B cell (primary cell): ENCODE measurements at regions of chr12 and their contacts with region 1.

Region 1: DNA sequence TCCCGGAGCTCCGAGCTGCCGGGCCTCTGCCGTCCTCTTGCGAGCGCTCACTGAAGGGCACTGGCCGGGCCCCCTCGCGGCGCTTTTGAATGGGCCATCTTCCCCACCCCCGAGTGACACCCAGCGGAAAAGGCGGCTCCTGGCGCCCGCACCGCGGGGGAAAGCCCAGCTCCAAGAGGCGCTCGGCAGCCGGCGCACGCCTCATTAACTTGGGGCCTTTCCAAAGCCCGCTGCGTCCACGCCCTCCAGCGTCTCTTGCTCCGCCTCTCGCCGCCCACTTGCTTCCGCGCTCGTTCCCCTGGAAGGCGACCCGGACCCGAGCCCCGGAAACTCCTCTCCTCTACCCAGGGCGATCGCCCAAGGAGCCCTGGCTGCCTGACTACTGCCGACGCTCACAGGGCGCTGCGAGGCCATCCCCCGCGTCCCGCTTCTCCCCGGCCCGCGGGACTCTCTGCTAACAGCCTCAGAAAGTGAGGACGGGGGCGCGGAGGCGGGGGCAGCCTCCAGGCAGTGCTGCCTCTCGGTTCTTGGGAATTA is at the start of gene PHLDA1:
- DNase-seq: peak; percentile 93
- ATAC-seq: peak; percentile 87
- H3K4me3 ChIP-seq: peak within 1 kb of the TSS; percentile 48 to 89 (median 79)
- H3K4me3 Mint-ChIP-seq: peak within 1 kb of the TSS; percentile 96
- H3K27ac ChIP-seq: peak within 1 kb of the TSS; percentile 19 to 81
- H3K27ac Mint-ChIP-seq: peak within 1 kb of the TSS; percentile 92
- H3K4me1 ChIP-seq: peaks cover 18 to 23% of the 10 kb centered on the region in 2 donors
- H3K4me1 Mint-ChIP-seq: peaks cover 25% of the 10 kb centered on the region
- H3K27me3 ChIP-seq: peaks cover 2 to 29% (median 25%) of the 10 kb centered on the region in 4 experiments
- H3K27me3 Mint-ChIP-seq: peaks cover 23% of the 10 kb centered on the region
- CTCF ChIP-seq: peak; percentile 48
- total RNA-seq, gene PHLDA1: 1.7 TPM in 2 replicates

Region 2: GRCh38 chr12:74537707-74538385 is 1493.8 kb before region 1 on chr12 and contains the start of gene ATXN7L3B:
- CTCF ChIA-PET with region 1: no interaction called
- POLR2A ChIA-PET with region 1: no interaction called
- intact Hi-C with region 1: loop called (anchors 2 kb)
- DNase-seq: peak; percentile 97
- ATAC-seq: peak; percentile 97
- H3K4me3 ChIP-seq: peak within 1 kb of the TSS; percentile 71 to 97 (median 96)
- H3K4me3 Mint-ChIP-seq: peak within 1 kb of the TSS; percentile 98
- H3K27ac ChIP-seq: peak within 1 kb of the TSS; percentile 92 to 94
- H3K27ac Mint-ChIP-seq: peak within 1 kb of the TSS; percentile 98
- H3K4me1 ChIP-seq: peaks cover 41 to 44% of the 10 kb centered on the region in 2 donors
- H3K4me1 Mint-ChIP-seq: peaks cover 56% of the 10 kb centered on the region
- H3K27me3 ChIP-seq: no peaks in the 10 kb centered on the region
- H3K27me3 Mint-ChIP-seq: no peaks in the 10 kb centered on the region
- CTCF ChIP-seq: no peak
- total RNA-seq, gene ATXN7L3B: 35.3 and 38.6 TPM in 2 replicates

Region 3: DNA sequence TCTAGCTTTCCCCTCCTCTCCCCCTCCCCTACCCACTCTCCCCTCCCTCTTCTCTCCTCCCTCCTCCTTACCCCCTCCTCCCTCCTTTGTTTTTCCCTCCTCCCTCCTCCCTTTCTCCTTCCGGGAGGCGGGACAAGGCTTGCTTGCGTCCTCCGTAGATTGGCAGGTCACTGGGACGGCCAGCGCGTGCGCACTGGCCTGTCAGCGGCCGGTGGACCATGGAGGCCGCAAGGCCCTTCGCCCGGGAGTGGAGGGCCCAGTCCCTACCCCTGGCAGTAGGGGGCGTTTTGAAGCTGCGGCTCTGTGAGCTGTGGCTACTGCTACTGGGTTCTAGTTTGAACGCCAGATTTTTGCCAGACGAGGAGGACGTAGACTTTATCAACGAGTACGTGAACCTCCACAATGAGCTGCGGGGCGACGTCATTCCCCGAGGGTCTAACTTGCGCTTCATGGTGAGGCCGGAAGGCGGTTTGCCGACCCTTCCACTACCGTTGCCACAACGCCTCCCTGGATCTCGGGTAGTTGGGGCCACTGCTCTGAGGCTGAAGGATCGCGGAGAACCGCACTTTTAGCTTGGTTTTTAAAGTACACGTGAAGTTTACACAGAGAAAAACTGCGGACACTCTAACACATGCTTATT is 640.6 kb before region 1 on chr12 and contains the start of gene GLIPR1L2:
- CTCF ChIA-PET with region 1: interaction called, 4 read pairs
- POLR2A ChIA-PET with region 1: no interaction called
- intact Hi-C with region 1: loop called (anchors 2 kb)
- DNase-seq: peak; percentile 94
- ATAC-seq: peak; percentile 94
- H3K4me3 ChIP-seq: peak within 1 kb of the TSS; percentile 66 to 85 (median 75)
- H3K4me3 Mint-ChIP-seq: peak within 1 kb of the TSS; percentile 98
- H3K27ac ChIP-seq: peak within 1 kb of the TSS; percentile 73 to 85
- H3K27ac Mint-ChIP-seq: peak within 1 kb of the TSS; percentile 99
- H3K4me1 ChIP-seq: peaks cover 23 to 24% of the 10 kb centered on the region in 2 donors
- H3K4me1 Mint-ChIP-seq: peaks cover 33% of the 10 kb centered on the region
- H3K27me3 ChIP-seq: no peaks in the 10 kb centered on the region
- H3K27me3 Mint-ChIP-seq: no peaks in the 10 kb centered on the region
- CTCF ChIP-seq: peak; percentile 81
- total RNA-seq, gene GLIPR1L2: 0.46 and 0.91 TPM in 2 replicates

Region 4: GRCh38 chr12:75526655-75527511 is 504.7 kb before region 1 on chr12:
- CTCF ChIA-PET with region 1: interaction called, 210 read pairs
- POLR2A ChIA-PET with region 1: no interaction called
- intact Hi-C with region 1: no loop called
- DNase-seq: peak; percentile 62
- ATAC-seq: peak; percentile 57
- H3K4me3 ChIP-seq: no peak overlapping the region
- H3K4me3 Mint-ChIP-seq: no peak overlapping the region
- H3K27ac ChIP-seq: no peak overlapping the region
- H3K27ac Mint-ChIP-seq: no peak overlapping the region
- H3K4me1 ChIP-seq: peaks cover 5 to 6% of the 10 kb centered on the region in 2 donors
- H3K4me1 Mint-ChIP-seq: peaks cover 4% of the 10 kb centered on the region
- H3K27me3 ChIP-seq: peaks cover 0 to 3% (median 0%) of the 10 kb centered on the region in 4 experiments
- H3K27me3 Mint-ChIP-seq: peaks cover 27% of the 10 kb centered on the region
- CTCF ChIP-seq: peak; percentile 82

Region 5: GRCh38 chr12:75837700-75838099 is 193.9 kb before region 1 on chr12:
- CTCF ChIA-PET with region 1: no interaction called
- POLR2A ChIA-PET with region 1: no interaction called
- intact Hi-C with region 1: no loop called
- DNase-seq: no peak
- ATAC-seq: no peak
- H3K4me3 ChIP-seq: no peak overlapping the region
- H3K4me3 Mint-ChIP-seq: no peak overlapping the region
- H3K27ac ChIP-seq: no peak overlapping the region
- H3K27ac Mint-ChIP-seq: no peak overlapping the region
- H3K4me1 ChIP-seq: no peaks in the 10 kb centered on the region
- H3K4me1 Mint-ChIP-seq: no peaks in the 10 kb centered on the region
- H3K27me3 ChIP-seq: no peaks in the 10 kb centered on the region
- H3K27me3 Mint-ChIP-seq: peaks cover 30% of the 10 kb centered on the region
- CTCF ChIP-seq: no peak

Region 6: GRCh38 chr12:75917083-75917482 is 114.5 kb before region 1 on chr12:
- CTCF ChIA-PET with region 1: interaction called, 3 read pairs
- POLR2A ChIA-PET with region 1: no interaction called
- intact Hi-C with region 1: loop called (anchors 2 kb)
- DNase-seq: peak; percentile 55
- ATAC-seq: peak; percentile 73
- H3K4me3 ChIP-seq: no peak overlapping the region
- H3K4me3 Mint-ChIP-seq: peak overlapping the region; percentile 6
- H3K27ac ChIP-seq: no peak overlapping the region
- H3K27ac Mint-ChIP-seq: peak overlapping the region; percentile 1
- H3K4me1 ChIP-seq: peaks cover 13 to 14% of the 10 kb centered on the region in 2 donors
- H3K4me1 Mint-ChIP-seq: peaks cover 23% of the 10 kb centered on the region
- H3K27me3 ChIP-seq: peaks cover 0 to 3% (median 0%) of the 10 kb centered on the region in 4 experiments
- H3K27me3 Mint-ChIP-seq: no peaks in the 10 kb centered on the region
- CTCF ChIP-seq: no peak

Region 7: GRCh38 chr12:75977952-75978671 is 53.5 kb before region 1 on chr12:
- CTCF ChIA-PET with region 1: interaction called, 5 read pairs
- POLR2A ChIA-PET with region 1: no interaction called
- intact Hi-C with region 1: loop called (anchors 2 kb)
- DNase-seq: peak; percentile 43
- ATAC-seq: peak; percentile 94
- H3K4me3 ChIP-seq: no peak overlapping the region
- H3K4me3 Mint-ChIP-seq: peak overlapping the region; percentile 4
- H3K27ac ChIP-seq: no peak overlapping the region
- H3K27ac Mint-ChIP-seq: peak overlapping the region; percentile 16
- H3K4me1 ChIP-seq: peaks cover 0 to 5% of the 10 kb centered on the region in 2 donors
- H3K4me1 Mint-ChIP-seq: peaks cover 18% of the 10 kb centered on the region
- H3K27me3 ChIP-seq: no peaks in the 10 kb centered on the region
- H3K27me3 Mint-ChIP-seq: no peaks in the 10 kb centered on the region
- CTCF ChIP-seq: no peak

Region 8: DNA sequence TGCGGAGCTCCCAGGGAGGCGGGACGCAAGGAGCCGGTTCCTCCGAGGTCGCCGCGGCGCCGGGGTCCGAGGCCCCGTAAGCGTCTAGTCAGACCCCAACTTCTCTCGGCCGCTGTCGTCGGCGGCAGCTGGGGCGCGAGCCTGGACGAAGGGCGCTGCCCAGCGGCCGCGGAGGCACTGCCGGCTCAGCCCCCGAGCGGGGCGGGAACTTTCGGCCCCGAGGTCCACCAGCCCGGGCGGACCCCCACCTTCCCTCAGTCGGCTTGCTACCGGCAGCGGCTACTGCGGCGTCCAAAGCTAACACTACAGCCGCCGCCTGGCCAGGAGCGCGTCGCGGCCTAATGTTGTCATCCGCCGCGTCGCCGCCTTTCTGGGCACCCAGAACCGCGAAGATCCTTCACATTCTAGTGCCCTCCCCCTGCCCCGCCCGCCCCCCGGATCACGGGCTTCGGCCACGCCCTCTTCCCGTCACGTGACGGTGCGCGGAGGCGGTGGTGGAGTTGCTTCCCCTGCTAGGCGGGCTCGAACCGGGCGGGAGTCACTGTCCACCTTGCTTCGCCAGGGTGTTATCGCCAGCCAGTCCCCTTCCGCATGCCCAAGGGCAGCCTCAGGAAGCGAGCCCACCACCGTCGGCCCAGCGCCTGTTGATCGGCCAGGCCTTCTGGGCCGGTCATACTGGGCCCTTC is 527.9 kb after region 1 on chr12 and contains the start of gene OSBPL8:
- CTCF ChIA-PET with region 1: no interaction called
- POLR2A ChIA-PET with region 1: no interaction called
- intact Hi-C with region 1: loop called (anchors 5 kb)
- DNase-seq: peak; percentile 95
- ATAC-seq: peak; percentile 79
- H3K4me3 ChIP-seq: peak within 1 kb of the TSS; percentile 76 to 99 (median 93)
- H3K4me3 Mint-ChIP-seq: peak within 1 kb of the TSS; percentile 98
- H3K27ac ChIP-seq: peak within 1 kb of the TSS; percentile 93 to 96
- H3K27ac Mint-ChIP-seq: peak within 1 kb of the TSS; percentile 98
- H3K4me1 ChIP-seq: peaks cover 29 to 46% of the 10 kb centered on the region in 2 donors
- H3K4me1 Mint-ChIP-seq: peaks cover 44% of the 10 kb centered on the region
- H3K27me3 ChIP-seq: no peaks in the 10 kb centered on the region
- H3K27me3 Mint-ChIP-seq: no peaks in the 10 kb centered on the region
- CTCF ChIP-seq: no peak
- total RNA-seq, gene OSBPL8: 112 and 116 TPM in 2 replicates